T-cell (primary cell): ENCODE measurements at regions of chr17 and their contacts with region 1.

Region 1: DNA sequence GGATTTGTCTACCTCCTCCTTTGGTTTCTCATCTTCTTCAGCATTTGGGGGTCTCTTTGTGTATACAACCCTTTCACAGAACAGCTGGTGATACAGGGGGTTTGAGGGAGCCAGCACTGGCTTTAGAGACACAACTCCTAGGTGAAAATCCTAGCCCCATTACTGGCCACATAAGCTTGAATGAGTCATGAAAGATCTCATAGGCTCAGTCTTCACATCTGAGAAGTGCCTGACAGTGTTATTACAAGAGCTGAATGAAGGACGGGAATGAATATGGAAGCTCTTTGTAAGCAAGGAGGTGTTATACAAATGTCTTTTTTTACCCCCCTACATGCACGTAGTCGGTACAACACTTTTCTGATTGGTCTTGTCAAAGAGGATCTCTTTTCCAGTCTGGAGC is 1.7 kb upstream of the B4GALNT2 start:
- DNase-seq: no peak
- ATAC-seq: no peak
- H3K4me3 ChIP-seq: no peak overlapping the region
- H3K4me3 Mint-ChIP-seq: no peak overlapping the region
- H3K27ac ChIP-seq: no peak overlapping the region
- H3K27ac Mint-ChIP-seq: no peak overlapping the region
- H3K4me1 ChIP-seq: peaks cover 0 to 12% of the 10 kb centered on the region in 2 experiments
- H3K4me1 Mint-ChIP-seq: peaks cover 7 to 11% (median 9%) of the 10 kb centered on the region in 3 donors
- H3K27me3 ChIP-seq: peaks cover 9 to 51% of the 10 kb centered on the region in 2 experiments
- H3K27me3 Mint-ChIP-seq: peaks cover 54 to 67% of the 10 kb centered on the region in 2 donors

Region 2: DNA sequence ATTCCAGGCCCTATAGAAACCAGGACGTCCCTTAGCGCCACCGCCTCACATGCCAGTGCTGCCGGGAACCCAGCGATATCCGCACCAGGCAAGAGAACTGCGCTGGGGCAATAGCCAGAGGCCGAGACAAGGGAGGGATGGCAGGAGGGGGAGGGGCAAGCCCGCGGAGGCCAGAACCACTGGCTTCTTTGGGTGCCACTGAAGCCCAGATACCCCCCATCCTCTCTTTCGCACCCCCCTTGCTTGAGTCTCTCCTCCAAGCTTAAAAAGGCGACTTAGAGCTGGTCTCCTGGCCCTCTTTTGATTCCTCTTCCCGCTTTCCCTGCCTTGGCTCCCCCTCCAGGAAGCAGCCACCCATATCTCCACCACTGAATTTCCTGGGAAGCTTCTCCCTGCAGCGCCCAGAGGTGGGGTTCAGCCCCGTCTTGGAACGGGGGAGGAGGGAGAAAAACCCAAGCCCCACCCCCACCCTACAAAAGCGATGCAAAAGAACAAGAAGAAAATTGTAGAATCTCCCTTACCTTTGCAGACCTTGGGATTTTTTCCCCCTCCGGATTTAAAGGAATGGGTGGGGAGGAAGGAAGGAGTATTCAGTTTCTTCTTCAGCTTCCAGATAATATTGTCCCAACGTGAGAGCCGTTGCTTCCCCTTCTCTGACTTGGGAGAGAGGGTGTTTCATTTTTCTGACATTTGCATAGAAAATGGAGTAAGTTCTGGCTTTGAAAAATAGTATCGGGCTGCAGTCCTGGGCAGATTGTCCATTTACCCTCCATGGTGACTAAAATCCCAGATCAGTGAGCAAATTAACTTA is 526.7 kb before region 1 on chr17:
- CTCF ChIA-PET with region 1: interaction called in 1 of 2 experiments, 10 read pairs
- POLR2A ChIA-PET with region 1: no interaction called
- DNase-seq: no peak
- ATAC-seq: no peak
- H3K4me3 ChIP-seq: no peak overlapping the region
- H3K4me3 Mint-ChIP-seq: peak overlapping the region in 1 of 3 donors; percentile 8
- H3K27ac ChIP-seq: no peak overlapping the region
- H3K27ac Mint-ChIP-seq: peak overlapping the region in 1 of 2 donors; percentile 69
- H3K4me1 ChIP-seq: peaks cover 4 to 36% of the 10 kb centered on the region in 2 experiments
- H3K4me1 Mint-ChIP-seq: peaks cover 4 to 21% (median 12%) of the 10 kb centered on the region in 3 donors
- H3K27me3 ChIP-seq: peaks cover 31 to 88% of the 10 kb centered on the region in 2 experiments
- H3K27me3 Mint-ChIP-seq: peaks cover 84 to 91% of the 10 kb centered on the region in 2 donors

Region 3: DNA sequence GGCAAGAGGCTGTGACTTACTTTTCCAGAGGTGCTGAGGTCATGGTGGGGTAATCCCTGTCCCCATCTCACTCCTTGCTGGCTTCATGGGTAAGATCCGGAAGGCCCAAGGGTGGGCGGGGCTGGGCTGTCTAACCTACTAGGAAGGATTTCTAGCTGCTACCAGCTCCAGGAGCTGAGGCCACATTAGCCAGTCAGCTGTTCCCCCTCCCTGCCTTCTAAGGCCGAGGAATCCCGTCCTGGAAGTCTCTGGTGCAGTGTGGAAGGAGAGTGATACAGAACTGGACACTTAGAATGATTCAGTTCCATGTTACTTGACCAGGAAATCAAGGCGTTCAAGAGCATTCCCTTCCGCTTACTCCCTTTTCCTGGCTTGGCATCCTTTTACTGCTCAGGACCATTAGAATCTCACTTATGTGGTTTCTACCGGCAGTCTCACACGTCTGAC is 70.6 kb after region 1 on chr17:
- CTCF ChIA-PET with region 1: no interaction called
- POLR2A ChIA-PET with region 1: no interaction called
- DNase-seq: no peak
- ATAC-seq: no peak
- H3K4me3 ChIP-seq: no peak overlapping the region
- H3K4me3 Mint-ChIP-seq: no peak overlapping the region
- H3K27ac ChIP-seq: no peak overlapping the region
- H3K27ac Mint-ChIP-seq: no peak overlapping the region
- H3K4me1 ChIP-seq: no peaks in the 10 kb centered on the region
- H3K4me1 Mint-ChIP-seq: peaks cover 0 to 2% (median 0%) of the 10 kb centered on the region in 3 donors
- H3K27me3 ChIP-seq: no peaks in the 10 kb centered on the region
- H3K27me3 Mint-ChIP-seq: no peaks in the 10 kb centered on the region

Region 4: GRCh38 chr17:49422714-49423113 is 291.8 kb after region 1 on chr17:
- CTCF ChIA-PET with region 1: no interaction called
- POLR2A ChIA-PET with region 1: no interaction called
- DNase-seq: no peak
- ATAC-seq: no peak
- H3K4me3 ChIP-seq: no peak overlapping the region
- H3K4me3 Mint-ChIP-seq: no peak overlapping the region
- H3K27ac ChIP-seq: no peak overlapping the region
- H3K27ac Mint-ChIP-seq: no peak overlapping the region
- H3K4me1 ChIP-seq: no peaks in the 10 kb centered on the region
- H3K4me1 Mint-ChIP-seq: no peaks in the 10 kb centered on the region
- H3K27me3 ChIP-seq: peaks cover 0 to 5% of the 10 kb centered on the region in 2 experiments
- H3K27me3 Mint-ChIP-seq: peaks cover 10 to 30% of the 10 kb centered on the region in 2 donors